ENCODE measurements at regions of chr22 and their contacts with region 1.

Region 1: DNA sequence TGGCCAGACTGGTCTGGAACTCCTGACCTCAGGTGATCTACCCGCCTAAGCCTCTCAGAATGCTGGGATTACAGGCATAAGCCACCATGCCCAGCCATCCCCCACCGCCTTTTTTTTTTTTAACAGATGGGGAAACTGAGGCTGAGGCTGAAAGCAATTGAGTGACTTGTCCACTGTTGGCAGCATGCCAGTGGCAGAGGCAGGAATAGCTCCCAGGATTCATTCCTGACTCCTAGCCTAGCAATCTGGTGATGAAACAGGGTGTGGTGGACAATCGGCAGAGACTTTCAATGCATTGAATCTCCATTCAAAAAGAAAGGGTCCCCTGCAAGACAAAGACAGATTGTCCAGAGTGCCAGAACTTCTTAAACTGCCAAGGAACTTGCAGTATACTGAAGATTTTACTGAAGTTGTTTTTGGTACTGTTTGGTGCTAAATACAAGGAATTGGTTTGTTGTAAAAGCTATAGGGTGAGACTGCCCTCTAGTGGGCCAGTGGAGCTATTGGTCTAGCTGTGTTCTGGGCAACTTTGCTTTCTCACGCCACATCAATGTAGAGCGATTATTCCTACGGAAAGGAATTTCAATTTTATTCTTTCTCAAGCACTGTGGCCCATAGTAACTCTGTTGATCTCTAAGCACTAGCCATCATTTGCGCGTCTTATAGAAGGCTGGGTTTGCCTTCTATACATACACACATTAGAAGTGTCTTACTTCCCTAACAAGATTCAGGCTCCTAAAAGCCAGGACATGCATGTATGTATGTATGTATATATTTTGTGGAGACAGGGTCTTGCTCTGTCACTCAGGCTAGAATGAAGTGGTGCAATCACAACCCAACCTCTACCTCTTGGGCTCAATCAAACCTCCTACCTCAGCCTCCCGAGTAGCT is 21.0 kb downstream of the C22orf31 start:
- DNase-seq: peak; percentile 65
- ATAC-seq: peak; percentile 65
- H3K4me3 ChIP-seq: no peak overlapping the region
- H3K27ac ChIP-seq: no peak overlapping the region
- H3K4me1 ChIP-seq: peaks cover 87% of the 10 kb centered on the region
- H3K27me3 ChIP-seq: no peaks in the 10 kb centered on the region
- CTCF ChIP-seq: peak; percentile 86
- EP300 ChIP-seq: no peak
- POLR2A ChIP-seq: no peak
- RAD21 ChIP-seq: peak; percentile 88

Region 2: DNA sequence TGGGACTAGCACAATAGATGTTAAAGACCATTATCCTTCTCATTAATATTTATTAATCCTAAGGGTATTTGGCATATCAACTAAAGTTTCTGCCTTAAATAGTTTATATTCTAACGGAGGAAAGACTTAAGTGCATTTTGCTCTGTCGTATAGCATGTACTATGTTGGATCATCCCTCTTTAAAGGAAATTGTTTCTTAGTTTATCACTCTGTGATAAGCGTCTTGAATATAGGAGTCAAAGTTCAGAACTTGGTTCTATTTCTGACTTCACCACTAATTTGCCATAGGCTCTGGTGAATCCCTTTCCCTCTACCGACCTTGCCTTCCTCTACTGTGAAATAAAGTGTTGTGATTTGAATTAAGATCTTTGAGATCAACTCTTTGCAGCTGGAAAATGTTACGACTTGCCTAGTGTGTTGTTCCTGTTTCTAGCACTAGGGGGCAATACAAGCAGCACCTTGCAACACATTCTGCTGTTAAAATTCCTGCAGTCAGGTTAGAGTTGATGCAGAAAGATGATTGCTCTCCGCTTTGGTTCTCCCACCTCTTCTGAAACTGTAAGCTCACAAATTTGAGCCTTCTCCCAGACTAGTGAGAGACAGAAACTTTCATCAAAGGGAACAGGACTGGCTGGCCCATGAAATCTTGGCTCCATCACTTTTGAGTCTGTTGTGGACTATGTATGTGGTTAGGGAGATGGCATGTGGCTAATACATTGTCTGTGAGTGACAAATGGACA is 185.1 kb before region 1 on chr22:
- CTCF ChIA-PET with region 1: interaction called, 22 read pairs
- POLR2A ChIA-PET with region 1: interaction called, 5 read pairs
- in situ Hi-C with region 1: loop called (anchors 5 kb)
- intact Hi-C with region 1: loop called (anchors 1 kb)
- DNase-seq: peak; percentile 70
- ATAC-seq: peak; percentile 79
- H3K4me3 ChIP-seq: no peak overlapping the region
- H3K27ac ChIP-seq: no peak overlapping the region
- H3K4me1 ChIP-seq: peaks cover 26% of the 10 kb centered on the region
- H3K27me3 ChIP-seq: no peaks in the 10 kb centered on the region
- CTCF ChIP-seq: peak; percentile 90
- EP300 ChIP-seq: no peak
- POLR2A ChIP-seq: no peak
- RAD21 ChIP-seq: peak; percentile 86

Region 3: DNA sequence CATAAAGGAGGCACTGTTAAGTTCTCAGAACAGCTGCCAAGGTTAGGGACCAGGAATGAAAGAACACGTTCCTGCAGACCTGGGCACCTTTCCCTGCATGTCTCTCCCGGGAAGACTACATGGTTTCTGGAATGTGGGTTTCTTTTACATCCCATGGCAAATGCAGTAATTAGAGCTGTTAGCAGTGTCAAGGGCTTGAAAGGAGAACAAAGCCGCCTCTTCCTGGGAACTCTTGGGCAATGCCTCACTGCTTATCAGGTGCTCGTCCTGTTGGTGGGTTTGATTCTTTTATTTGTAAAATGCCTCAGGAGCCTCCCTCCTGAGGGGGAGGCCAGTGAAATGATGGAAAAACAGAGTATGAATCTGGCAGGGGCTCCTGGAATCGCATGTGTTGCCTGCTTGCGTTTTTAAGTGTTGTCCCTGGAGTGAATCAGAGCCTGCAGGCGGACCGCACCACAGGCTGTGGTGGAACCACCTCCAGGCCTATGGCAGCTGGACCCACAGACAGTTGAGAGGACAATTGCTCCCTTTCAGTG is 21.7 kb after region 1 on chr22:
- CTCF ChIA-PET with region 1: no interaction called
- POLR2A ChIA-PET with region 1: no interaction called
- in situ Hi-C with region 1: no loop called
- intact Hi-C with region 1: no loop called
- DNase-seq: peak; percentile 73
- ATAC-seq: peak; percentile 54
- H3K4me3 ChIP-seq: peak overlapping the region in 2 of 3 experiments; percentile 24 to 26; a peak in 2 of 6 replicates
- H3K27ac ChIP-seq: no peak overlapping the region
- H3K4me1 ChIP-seq: peaks cover 51% of the 10 kb centered on the region
- H3K27me3 ChIP-seq: 0 out of 5 replicates have a peak, but pooled peaks cover 0 to 1% of the 10 kb centered on the region in 2 experiments
- CTCF ChIP-seq: no peak
- EP300 ChIP-seq: no peak
- POLR2A ChIP-seq: no peak
- RAD21 ChIP-seq: no peak

Measured in HepG2 (cell line).